Activated CD4-positive, alpha-beta T cell treated with anti-CD3 and anti-CD28 coated beads, Interleukin-2, amount 10 ng/mL, durations not matched to agents 7 days and 5 days (primary cell): ENCODE measurements at regions of chr1 and their contacts with region 1.

Region 1: GRCh38 chr1:165392634-165393571 is 36.4 kb upstream of the LMX1A start:
- DNase-seq: peak; percentile 96
- H3K4me3 Mint-ChIP-seq: peak overlapping the region; percentile 68
- H3K27ac Mint-ChIP-seq: peak overlapping the region; percentile 82
- H3K4me1 Mint-ChIP-seq: peaks cover 29% of the 10 kb centered on the region
- H3K27me3 Mint-ChIP-seq: peaks cover 86% of the 10 kb centered on the region

Region 2: GRCh38 chr1:165592945-165593823 is 200.3 kb after region 1 on chr1:
- CTCF ChIA-PET with region 1: interaction called, 20 read pairs
- POLR2A ChIA-PET with region 1: no interaction called
- DNase-seq: peak; percentile 80
- H3K4me3 Mint-ChIP-seq: no peak overlapping the region
- H3K27ac Mint-ChIP-seq: no peak overlapping the region
- H3K4me1 Mint-ChIP-seq: peaks cover 22% of the 10 kb centered on the region
- H3K27me3 Mint-ChIP-seq: peaks cover 70% of the 10 kb centered on the region